Activated CD4-positive, alpha-beta T cell treated with anti-CD3 and anti-CD28 coated beads, Interleukin-2, amount 10 ng/mL, durations not matched to agents 24 days and 14 days (primary cell): ENCODE measurements at regions of chr1 and their contacts with region 1.

Region 1: DNA sequence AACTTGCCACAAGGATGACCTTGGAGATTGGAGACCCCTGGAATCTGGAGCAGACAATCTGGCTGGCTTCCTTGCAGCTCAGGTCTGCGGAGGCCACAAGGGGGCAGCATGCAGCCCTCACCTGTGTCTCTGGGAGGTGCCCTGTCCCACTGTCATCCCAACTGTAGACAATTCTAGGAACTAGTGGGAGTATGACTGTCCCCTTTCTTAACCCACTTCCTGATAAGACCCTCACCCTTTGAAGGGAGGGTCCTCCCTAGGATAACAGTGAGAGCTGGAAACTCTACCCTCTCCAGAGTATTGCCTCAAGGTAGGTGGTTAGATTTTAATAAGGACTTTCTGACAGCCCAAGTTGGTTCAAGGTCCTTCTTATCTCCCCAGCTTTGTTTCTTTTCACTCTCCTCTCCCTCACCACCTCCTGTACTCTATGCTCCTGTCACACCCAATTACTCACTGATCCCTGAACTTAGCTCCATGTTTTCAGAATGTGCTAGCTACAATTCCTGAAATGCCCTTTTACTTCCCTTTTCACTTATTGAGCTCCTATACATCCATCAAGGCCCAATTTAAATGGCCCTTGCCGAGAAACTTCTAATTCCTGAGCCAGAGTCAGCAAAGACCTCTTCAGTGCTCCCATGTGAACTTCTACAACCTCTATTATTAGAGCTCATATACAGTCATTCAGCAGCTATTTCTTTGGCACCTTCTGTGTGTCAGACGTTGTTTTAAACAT is 9.2 kb upstream of the KCNQ4 start:
- DNase-seq: peak; percentile 89
- H3K4me3 Mint-ChIP-seq: no peak overlapping the region
- H3K27ac Mint-ChIP-seq: peak overlapping the region; percentile 38
- H3K4me1 Mint-ChIP-seq: peaks cover 19% of the 10 kb centered on the region
- H3K27me3 Mint-ChIP-seq: no peaks in the 10 kb centered on the region

Region 2: DNA sequence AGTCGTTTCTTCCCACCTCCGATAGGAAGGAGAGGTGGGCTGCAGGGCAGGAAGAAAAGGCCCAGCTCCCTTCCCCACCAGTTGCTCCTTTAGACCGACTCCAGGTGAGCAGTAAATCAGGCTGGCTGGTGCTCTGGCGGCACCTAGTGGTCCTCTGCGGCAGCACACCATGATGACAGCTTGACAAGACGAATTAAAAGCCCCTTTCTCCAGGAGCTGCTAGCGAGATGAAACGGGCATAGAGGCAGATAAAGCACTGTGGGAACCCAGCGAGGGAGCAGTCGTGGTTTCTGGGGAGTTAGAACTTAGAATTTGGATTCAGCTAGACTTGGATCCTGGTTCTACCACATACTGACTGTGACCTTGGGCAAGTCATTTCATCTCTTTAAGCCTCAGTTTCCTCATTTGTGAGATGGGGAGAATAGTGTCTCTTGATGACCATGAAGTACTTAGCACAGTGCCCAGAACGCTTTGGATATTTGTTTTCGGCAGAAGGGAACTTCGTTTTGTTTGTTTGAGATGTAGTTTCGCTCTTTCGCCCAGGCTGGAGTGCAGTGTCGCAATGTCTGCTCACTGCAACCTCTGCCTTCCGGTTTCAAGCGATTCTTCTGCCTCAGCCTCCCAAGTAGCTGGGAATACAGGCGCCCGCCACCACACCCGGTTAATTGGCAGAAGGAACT is 435.5 kb before region 1 on chr1:
- intact Hi-C with region 1: no loop called
- DNase-seq: peak; percentile 97
- H3K4me3 Mint-ChIP-seq: peak overlapping the region; percentile 34
- H3K27ac Mint-ChIP-seq: peak overlapping the region; percentile 35
- H3K4me1 Mint-ChIP-seq: peaks cover 42% of the 10 kb centered on the region
- H3K27me3 Mint-ChIP-seq: no peaks in the 10 kb centered on the region

Region 3: DNA sequence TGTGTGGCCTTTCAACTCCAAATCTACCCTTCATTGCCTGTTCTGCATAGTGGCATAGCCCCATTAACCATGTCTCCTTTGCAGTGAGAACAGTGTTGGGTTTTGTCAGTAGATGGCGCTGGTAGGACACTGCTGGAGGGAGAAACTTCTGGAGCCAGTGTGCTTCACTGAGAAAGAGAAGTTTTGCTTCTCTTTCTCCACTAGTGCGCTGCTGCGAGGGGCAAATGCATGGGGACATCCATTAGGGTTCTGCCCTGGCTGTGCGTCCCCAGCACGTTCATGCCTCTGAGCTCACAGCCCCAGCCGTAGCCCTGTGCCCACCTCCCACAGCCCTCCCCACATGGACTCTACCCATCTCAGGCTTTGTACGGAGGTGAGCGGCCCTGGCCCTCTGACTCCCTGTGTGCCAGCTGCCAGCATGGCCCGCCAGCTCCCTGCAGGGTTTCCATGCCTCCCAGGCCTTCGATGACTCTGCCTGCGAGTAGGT is 162.0 kb before region 1 on chr1:
- intact Hi-C with region 1: loop called (anchors 5 kb)
- DNase-seq: peak; percentile 93
- H3K4me3 Mint-ChIP-seq: no peak overlapping the region
- H3K27ac Mint-ChIP-seq: no peak overlapping the region
- H3K4me1 Mint-ChIP-seq: no peaks in the 10 kb centered on the region
- H3K27me3 Mint-ChIP-seq: peaks cover 5% of the 10 kb centered on the region

Region 4: DNA sequence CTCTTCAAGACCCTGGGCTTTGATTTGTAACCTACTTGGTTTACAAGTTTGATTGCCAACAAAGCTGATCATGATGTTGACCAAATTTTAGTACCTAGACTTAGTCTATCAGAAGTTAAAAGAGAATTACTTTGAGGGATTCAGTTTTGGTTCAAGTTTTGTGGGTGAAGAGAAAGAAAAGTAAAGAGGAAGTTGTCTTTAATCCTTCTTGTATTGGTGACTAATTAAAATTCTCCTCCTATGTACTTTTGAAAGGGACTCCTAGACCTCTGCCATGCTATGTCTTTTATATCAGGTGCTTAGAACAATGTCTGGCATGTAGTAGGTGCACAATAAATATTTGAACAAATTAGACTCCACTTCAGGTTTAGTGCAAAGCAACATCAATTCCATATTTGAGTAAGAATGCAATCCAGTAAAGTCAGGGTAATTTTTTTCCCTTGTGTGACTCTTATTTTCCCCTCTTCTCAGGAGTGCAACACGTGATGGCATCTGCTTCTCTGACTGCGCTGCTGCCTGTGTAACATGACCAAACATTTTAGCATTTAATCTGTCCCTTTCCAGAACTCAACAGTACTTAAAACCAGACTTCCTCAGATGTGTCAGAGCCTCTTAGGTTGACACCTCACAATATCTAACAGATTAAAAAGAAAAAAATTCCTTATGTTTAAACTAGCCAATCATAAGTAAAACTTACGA is 31.9 kb before region 1 on chr1:
- intact Hi-C with region 1: no loop called
- DNase-seq: no peak
- H3K4me3 Mint-ChIP-seq: peak overlapping the region; percentile 2
- H3K27ac Mint-ChIP-seq: peak overlapping the region; percentile 77
- H3K4me1 Mint-ChIP-seq: peaks cover 45% of the 10 kb centered on the region
- H3K27me3 Mint-ChIP-seq: no peaks in the 10 kb centered on the region

Region 5: DNA sequence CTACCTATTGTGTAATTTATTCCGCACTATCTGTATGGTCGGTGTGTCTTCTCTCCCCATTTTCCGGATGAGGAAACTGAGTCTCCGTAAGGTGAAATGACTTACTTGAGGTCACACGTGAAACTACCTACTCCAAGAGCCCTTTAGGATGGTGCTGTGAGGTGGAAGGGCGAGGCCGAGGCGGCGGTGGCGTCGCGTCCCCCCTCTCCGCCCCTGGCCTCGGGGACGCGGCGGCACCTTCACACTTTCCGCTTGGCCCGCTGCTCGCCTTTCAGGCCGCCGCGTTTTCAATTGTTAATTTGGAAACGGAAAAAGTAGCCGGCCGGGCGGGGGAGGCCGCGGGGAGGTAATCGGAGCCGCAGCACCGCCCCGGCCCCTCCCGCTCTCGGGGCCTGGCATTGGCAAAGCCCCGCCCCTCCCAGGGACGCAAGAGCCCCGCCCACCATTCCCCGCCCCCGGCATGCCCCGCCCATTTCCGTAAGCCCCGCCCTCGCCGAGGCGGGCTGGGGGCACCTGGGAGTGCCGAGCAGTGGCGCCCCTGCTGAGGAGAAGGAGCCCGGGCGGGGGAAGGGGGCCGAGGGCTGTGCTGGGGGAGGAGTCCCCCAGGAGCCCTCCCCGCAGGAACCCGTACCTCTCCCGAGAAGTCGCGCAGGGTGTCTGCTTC is 27.8 kb after region 1 on chr1:
- intact Hi-C with region 1: loop called (anchors 5 kb)
- DNase-seq: peak; percentile 96
- H3K4me3 Mint-ChIP-seq: peak overlapping the region; percentile 64
- H3K27ac Mint-ChIP-seq: peak overlapping the region; percentile 40
- H3K4me1 Mint-ChIP-seq: peaks cover 30% of the 10 kb centered on the region
- H3K27me3 Mint-ChIP-seq: peaks cover 2% of the 10 kb centered on the region

Region 6: DNA sequence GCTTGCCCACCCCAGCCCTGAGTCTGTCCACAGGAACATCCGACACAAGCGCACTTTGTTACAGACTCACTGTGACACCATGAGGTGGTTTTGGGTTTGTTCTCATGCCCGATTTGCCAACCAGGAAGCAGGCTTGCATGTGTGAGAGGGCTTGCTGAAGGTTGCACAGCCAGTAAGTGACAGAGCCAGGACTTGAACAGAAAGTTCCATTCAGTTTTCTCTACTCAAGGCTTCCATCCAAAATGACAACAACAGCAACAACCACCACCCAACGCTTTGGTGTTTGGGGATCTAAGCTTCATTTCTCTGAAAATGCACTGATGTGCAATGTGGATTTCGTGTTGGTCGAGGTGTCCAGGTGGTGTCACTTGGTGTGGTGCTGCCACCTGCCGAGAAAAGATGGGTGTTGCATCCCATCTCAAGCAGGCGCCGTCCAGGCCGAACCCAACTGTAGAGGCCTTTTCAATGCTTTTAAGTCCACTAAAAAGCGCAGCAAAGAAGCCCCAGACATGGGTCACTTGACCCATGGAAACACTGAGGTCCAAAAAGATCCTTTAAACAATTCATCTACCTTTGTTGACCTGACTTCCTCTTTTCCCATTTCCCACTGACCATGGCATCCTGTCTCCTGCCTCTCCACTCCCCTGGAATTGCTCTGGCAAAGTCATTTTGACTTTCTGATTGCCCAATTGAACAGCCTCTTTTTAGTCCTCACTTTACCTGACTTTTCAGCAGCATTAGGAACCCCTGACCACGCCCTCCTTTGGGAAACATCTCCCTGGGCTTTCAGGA is 75.6 kb after region 1 on chr1:
- intact Hi-C with region 1: loop called (anchors 1 kb)
- DNase-seq: peak; percentile 94
- H3K4me3 Mint-ChIP-seq: peak overlapping the region; percentile 26
- H3K27ac Mint-ChIP-seq: peak overlapping the region; percentile 55
- H3K4me1 Mint-ChIP-seq: peaks cover 28% of the 10 kb centered on the region
- H3K27me3 Mint-ChIP-seq: no peaks in the 10 kb centered on the region

Region 7: DNA sequence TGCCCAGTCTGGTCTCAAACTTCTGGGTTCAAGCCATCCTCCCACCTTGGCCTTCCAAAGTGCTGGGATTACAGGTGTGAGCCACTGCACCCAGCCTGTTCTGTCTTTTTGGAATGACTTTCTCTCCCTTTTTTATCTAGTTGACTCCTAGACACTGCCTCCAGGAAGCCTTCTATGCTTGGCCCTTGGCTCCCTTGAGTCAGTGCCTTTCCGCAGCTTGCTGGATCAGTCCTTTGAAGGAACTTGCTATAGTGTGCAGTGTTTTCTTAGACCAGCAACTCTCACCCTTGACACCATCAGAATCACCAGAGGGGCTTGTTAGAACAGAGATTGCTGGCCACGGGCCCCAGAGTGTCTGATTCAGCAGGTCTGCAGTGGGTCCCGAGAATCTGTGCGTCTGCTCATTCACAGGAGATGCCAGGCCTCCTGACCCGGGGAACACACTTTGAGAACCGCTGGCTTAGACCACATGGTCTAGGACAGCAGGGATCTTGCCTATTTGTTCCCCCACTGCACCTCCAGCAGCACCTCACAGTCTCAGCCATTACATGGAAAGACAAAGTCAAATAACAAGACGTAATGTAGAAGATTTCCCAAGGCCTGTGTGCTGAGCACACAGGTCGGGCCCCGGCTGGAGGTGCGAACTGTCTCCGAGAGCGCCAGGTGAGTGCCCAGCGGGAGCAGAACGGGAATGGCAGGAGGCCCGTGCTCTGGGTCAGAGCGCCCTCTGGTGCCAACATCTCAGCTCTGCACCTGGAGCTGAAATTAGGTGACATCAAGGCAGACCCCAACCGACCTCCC is 177.7 kb after region 1 on chr1:
- intact Hi-C with region 1: loop called (anchors 1 kb)
- DNase-seq: peak; percentile 89
- H3K4me3 Mint-ChIP-seq: no peak overlapping the region
- H3K27ac Mint-ChIP-seq: no peak overlapping the region
- H3K4me1 Mint-ChIP-seq: peaks cover 9% of the 10 kb centered on the region
- H3K27me3 Mint-ChIP-seq: peaks cover 26% of the 10 kb centered on the region